Activated T-helper 2 cell treated with anti-CD3 and anti-CD28 coated beads, Interferon-gamma antibody, Interleukin-2, Interleukin-4, amounts not matched to agents 10 μg/mL and 5 μg/mL and 100 μg/mL, durations not matched to agents 14 hours and 24 hours and 36 hours (primary cell): ENCODE measurements at regions of chr4 and their contacts with region 1.

Region 1: DNA sequence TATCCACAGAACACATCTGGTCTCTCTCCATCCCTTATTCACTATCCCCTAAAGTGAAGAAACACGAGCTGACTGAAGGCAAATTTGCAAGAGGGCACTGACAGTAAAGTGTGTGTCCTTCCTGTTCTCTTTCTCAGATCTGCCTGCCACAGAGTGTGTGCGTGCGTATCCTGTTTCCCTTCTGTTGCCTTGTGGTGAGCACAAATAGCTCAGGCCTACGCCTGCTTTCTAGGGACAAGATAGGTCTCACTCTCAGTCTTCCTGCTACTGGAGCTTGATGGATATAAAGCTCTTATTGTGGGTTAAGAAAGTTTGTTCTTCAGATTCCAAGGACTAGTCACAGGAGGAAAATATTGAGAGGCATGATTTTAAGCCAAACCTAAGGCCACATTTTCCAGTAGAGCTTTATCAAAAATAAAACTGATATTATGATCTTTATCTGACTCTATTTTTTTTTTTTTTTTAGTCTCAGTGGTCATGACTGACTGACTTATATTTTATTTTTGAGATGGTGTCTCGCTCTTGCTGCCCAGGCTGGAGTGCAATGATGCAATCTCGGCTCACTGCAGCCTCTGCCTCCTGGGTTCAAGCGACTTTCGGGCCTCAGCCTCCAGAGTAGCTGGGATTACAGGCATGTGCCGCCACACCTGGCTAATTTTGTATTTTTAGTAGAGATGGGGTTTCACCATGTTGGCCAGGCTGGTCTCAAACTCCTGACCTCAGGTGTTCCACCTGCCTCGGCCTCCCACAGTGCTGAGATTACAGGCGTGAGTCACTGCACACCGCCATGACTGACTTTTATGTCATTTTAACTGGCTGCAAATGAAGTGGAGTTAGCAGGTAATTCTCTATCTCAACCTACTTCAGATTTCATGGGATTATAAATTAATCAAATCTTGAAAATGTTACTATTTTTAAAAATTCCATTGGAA is 140.3 kb upstream of the SH3RF1 start:
- DNase-seq: peak; percentile 69
- H3K4me3 Mint-ChIP-seq: peak overlapping the region; percentile 10
- H3K27ac Mint-ChIP-seq: peak overlapping the region; percentile 51
- H3K4me1 Mint-ChIP-seq: peaks cover 30% of the 10 kb centered on the region
- H3K27me3 Mint-ChIP-seq: no peaks in the 10 kb centered on the region

Region 2: DNA sequence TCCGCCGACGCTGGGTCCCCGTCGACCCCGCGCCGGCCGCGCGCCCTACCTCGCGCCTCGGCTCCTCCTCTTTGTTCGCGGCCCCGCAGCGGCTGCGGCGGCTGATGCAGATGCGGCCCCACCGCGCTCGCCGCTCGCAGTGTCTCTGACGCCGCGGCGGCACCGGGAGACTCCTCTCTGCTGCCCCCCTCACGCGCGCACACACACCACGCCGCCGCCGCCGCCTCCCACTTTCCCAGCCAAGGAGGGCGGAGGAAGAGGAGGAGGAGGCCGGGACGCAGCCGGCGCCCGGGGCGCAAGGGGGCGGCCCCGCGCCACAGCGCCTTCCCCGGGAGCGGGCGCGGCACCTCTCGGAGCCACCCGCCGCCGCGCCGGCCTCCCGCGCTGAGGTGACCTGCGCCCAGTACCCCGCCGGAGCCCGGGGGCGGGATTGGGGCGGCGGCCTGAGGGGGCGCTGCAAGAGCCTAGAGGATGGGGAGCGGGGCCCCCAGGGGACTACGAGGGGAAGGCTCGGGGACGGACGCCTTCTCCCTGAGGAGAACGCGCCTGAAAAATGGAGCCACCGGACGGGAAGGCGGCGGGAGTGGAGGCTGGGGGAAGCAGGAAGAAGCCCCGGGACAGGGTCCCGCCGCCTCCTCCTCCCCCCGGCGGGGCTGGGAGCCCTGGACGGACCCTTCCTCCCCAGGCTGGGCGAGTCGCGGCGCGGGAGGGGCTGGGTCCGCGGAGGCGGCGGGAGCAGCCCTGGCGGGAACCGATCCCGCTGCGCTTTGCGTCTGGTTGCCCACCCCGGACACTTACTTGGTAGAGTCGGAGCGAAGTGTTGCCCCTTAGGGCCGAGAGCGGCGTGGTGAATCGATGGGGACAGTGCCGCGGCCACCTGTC is 140.1 kb before region 1 on chr4 and contains the start of gene SH3RF1:
- intact Hi-C with region 1: loop called (anchors 1 kb)
- DNase-seq: peak; percentile 13
- H3K4me3 Mint-ChIP-seq: peak within 1 kb of the TSS; percentile 75
- H3K27ac Mint-ChIP-seq: no peak within 1 kb of the TSS
- H3K4me1 Mint-ChIP-seq: peaks cover 9% of the 10 kb centered on the region
- H3K27me3 Mint-ChIP-seq: peaks cover 61% of the 10 kb centered on the region
- total RNA-seq, gene SH3RF1: 1.1 and 1.4 TPM in 2 replicates

Region 3: DNA sequence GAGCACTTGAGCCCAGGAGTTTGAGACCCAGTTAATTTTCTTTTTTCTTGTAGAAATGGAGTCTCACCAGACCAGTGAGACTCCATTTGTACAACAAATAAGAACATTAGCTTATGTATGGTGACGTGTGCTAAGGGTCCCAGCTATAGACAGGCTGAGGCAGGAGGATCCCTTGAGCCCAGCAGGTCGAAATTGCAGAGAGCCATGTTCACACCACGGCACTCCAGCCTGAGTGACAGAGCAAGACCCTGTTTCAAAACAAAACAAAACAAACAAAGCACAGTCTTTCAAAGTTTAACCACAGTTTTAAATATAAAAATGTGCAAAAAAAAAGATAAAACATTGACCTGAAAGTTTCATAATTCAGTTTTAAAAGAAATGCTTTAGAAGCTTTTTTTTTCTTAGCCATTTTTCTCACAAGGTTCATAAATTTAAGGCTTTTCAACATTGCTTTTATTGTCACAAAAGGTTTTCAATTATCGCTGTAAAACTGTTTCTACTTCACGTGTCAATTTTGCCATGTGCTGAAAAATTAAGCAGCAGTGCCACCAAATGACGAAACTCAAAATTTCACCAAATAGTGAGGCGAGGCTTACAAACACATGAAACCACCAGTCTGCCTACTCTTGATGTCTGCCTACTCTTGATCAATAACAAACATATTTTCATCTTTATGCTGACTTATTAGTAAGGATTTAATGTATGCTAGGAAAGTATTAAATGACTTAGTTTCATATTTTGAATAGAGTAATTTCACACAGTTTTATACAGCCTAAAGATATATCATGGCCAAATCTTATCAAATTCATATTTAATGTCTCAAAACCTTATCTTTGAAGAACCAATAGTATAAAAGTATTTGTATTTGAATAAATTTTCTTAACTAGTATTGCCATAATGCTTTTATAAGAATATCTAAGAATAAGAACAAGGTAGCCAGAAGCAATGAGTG is 75.0 kb after region 1 on chr4:
- intact Hi-C with region 1: loop called (anchors 10 kb)
- DNase-seq: no peak
- H3K4me3 Mint-ChIP-seq: no peak overlapping the region
- H3K27ac Mint-ChIP-seq: no peak overlapping the region
- H3K4me1 Mint-ChIP-seq: peaks cover 5% of the 10 kb centered on the region
- H3K27me3 Mint-ChIP-seq: no peaks in the 10 kb centered on the region

Region 4: DNA sequence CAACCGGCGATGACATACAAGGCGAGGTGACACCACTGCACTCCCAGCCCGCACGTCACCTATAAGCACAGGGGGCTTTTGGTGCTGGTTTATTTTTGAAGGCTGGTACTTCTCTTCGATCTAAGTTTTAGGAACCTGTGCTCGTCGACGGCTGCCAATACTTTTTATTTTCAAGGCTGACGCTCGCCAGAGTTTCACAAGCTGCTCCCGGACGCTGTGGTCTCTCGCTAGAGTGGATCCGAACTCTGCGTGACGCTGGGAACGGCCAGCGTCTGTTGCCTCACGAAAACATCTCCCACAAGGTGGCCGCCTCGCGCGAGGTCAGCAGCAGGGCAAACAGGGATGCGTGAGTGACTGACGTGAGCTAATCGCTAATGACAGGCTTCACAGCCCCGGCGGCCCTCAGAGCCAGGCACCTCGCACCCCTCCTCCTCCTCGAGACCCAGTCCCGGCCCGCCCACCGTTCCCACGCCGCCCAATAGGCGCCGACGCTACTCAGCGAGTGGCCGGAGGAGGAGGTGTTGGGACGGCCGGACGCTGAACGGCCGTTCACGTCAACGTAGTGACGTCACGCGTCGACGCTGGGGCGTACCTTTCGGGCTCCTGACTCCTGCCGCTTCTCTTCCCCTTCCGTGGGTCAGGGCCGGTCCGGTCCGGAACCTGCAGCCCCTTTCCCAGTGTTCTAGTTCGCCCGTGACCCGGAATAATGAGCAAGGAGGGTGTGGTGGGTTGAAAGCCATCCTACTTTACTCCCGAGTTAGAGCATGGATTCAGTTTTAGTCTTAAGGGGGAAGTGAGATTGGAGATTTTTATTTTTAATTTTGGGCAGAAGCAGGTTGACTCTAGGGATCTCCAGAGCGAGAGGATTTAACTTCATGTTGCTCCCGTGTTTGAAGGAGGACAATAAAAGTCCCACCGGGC is 209.1 kb after region 1 on chr4 and contains the start of gene CLCN3:
- intact Hi-C with region 1: loop called (anchors 10 kb)
- DNase-seq: peak; percentile 85
- H3K4me3 Mint-ChIP-seq: peak within 1 kb of the TSS; percentile 99
- H3K27ac Mint-ChIP-seq: peak within 1 kb of the TSS; percentile 99
- H3K4me1 Mint-ChIP-seq: peaks cover 62% of the 10 kb centered on the region
- H3K27me3 Mint-ChIP-seq: no peaks in the 10 kb centered on the region
- total RNA-seq, gene CLCN3: 23.8 and 25.6 TPM in 2 replicates